Breast epithelium (tissue), 4 donors: ENCODE measurements at regions of chr1 and their contacts with region 1.

Region 1: GRCh38 chr1:44038876-44039657 is 7.8 kb upstream of the SLC6A9 start:
- DNase-seq: no peak
- H3K4me3 ChIP-seq: no peak overlapping the region
- H3K27ac ChIP-seq: no peak overlapping the region
- H3K4me1 ChIP-seq: no peaks in the 10 kb centered on the region
- H3K27me3 ChIP-seq: no peaks in the 10 kb centered on the region
- CTCF ChIP-seq: no peak
- POLR2A ChIP-seq: no peak

Region 2: DNA sequence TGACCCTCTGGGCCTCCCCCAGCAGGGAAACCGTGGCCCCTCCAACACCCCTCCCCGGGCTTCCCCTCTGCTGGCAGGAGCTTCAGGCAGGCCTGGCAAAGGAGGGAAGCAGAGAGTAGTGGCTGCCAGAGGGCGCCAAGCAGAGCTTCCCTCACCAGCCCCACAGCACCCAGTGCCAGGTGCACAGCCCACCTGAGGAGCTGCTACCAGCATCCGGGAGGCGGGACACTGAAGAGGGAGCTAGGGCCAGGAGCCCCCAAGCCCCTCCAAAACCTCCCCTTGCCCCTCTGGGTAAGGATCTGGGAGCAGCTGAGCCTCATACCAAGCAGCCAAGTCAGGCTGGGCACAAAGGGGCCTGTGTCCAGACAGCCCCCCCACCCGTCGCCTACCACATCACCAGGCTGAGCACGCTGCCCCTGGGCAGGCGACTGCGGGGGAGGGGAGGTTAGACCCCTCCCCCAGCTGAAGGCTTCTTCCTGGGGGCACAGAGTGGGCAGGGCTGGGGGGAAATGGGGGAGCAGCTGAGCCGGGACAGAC is 28.1 kb before region 1 on chr1:
- intact Hi-C with region 1: loop called (anchors 2 kb)
- DNase-seq: no peak
- H3K4me3 ChIP-seq: no peak overlapping the region
- H3K27ac ChIP-seq: no peak overlapping the region
- H3K4me1 ChIP-seq: no peaks in the 10 kb centered on the region
- H3K27me3 ChIP-seq: no peaks in the 10 kb centered on the region
- CTCF ChIP-seq: no peak
- POLR2A ChIP-seq: no peak